ENCODE measurements at regions of chr12 and their contacts with region 1.

Region 1: GRCh38 chr12:57904848-57905811 is 36.2 kb upstream of the ATP23 start:
- DNase-seq: no peak
- H3K4me3 ChIP-seq: no peak overlapping the region
- CTCF ChIP-seq: peak; percentile 100

Region 2: GRCh38 chr12:57657744-57658143 is 247.4 kb before region 1 on chr12:
- CTCF ChIA-PET with region 1: no interaction called
- POLR2A ChIA-PET with region 1: no interaction called
- DNase-seq: no peak
- H3K4me3 ChIP-seq: no peak overlapping the region
- CTCF ChIP-seq: no peak

Region 3: GRCh38 chr12:57771708-57772428 is 133.3 kb before region 1 on chr12 and contains the start of gene METTL1:
- CTCF ChIA-PET with region 1: interaction called, 12 read pairs
- POLR2A ChIA-PET with region 1: no interaction called
- DNase-seq: peak; percentile 73
- H3K4me3 ChIP-seq: peak within 1 kb of the TSS; percentile 99
- CTCF ChIP-seq: no peak

Region 4: DNA sequence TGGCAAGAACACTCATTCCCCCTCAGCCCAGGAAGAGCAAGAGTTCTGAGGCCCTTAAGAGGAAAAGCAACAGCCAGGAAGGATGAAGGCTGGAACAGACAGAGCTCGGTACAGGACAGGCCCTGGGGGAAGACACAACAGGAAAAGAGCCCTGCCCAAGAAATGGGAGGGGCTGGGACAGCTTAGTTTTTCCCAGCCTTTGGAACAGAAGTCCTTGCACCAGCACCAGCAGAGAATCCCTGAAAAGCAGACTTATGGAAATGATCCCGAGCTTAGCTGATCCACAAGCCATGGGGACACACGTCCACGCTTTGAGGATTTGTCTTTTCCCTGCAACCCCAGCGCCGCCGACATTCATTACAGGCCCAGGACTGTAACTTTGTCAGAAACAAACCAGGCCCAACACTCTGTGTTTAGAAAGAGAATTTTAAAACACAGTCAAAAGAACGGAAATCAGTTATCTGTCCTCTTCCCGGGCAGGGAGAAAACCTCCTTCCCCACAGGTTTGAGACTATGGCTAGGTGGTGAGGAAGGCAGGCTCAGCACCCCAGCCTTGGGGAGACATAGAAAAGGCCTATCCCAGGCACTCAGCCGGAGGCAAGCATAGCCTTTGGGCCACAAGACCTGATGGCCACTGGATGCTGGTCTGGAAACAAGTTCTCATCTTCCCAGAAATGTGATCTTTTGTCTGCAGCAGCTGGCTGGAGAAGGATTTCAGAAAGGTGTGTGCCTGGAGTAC is 82.6 kb before region 1 on chr12:
- CTCF ChIA-PET with region 1: interaction called, 478 read pairs
- POLR2A ChIA-PET with region 1: no interaction called
- DNase-seq: no peak
- H3K4me3 ChIP-seq: no peak overlapping the region
- CTCF ChIP-seq: no peak

Region 5: GRCh38 chr12:57865090-57865751 is 39.9 kb before region 1 on chr12:
- CTCF ChIA-PET with region 1: interaction called, 25 read pairs
- POLR2A ChIA-PET with region 1: no interaction called
- DNase-seq: no peak
- H3K4me3 ChIP-seq: peak overlapping the region; percentile 52
- CTCF ChIP-seq: no peak

Region 6: DNA sequence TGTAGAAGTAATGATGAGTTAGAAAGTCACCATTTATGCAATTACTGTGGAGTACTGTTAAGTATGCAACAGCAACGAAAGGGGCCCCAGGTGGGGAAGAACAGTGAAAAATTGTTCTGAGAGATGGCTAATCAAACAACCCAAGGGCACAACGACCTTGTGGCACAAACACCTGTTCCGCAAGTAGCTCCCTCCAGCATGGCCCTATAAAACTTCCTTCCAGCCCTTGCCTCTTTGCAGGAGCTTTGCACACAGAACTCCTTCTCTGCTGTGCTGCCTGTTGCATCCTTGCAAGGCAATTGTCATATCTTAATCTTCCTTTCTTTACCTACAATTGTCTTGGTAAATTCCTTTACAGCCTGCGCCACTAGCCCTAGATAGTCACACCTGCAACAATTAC is 13.0 kb after region 1 on chr12:
- CTCF ChIA-PET with region 1: interaction called, 19 read pairs
- POLR2A ChIA-PET with region 1: no interaction called
- DNase-seq: no peak
- H3K4me3 ChIP-seq: no peak overlapping the region
- CTCF ChIP-seq: no peak

Measured in AG04449 (cell line).